ENCODE measurements at regions of chr7 and their contacts with region 1.

Region 1: GRCh38 chr7:55255496-55256435 is 109.4 kb upstream of the LANCL2 start:
- DNase-seq: peak; percentile 81
- H3K4me3 Mint-ChIP-seq: peak overlapping the region; percentile 78
- H3K27ac Mint-ChIP-seq: peak overlapping the region; percentile 72
- H3K4me1 Mint-ChIP-seq: no peaks in the 10 kb centered on the region
- H3K27me3 Mint-ChIP-seq: peaks cover 12% of the 10 kb centered on the region
- CTCF ChIP-seq: peak; percentile 68

Region 2: GRCh38 chr7:54781134-54781912 is 474.4 kb before region 1 on chr7:
- CTCF ChIA-PET with region 1: interaction called, 309 read pairs
- POLR2A ChIA-PET with region 1: interaction called, 3 read pairs
- intact Hi-C with region 1: no loop called
- DNase-seq: no peak
- H3K4me3 Mint-ChIP-seq: no peak overlapping the region
- H3K27ac Mint-ChIP-seq: no peak overlapping the region
- H3K4me1 Mint-ChIP-seq: no peaks in the 10 kb centered on the region
- H3K27me3 Mint-ChIP-seq: no peaks in the 10 kb centered on the region
- CTCF ChIP-seq: no peak

Region 3: DNA sequence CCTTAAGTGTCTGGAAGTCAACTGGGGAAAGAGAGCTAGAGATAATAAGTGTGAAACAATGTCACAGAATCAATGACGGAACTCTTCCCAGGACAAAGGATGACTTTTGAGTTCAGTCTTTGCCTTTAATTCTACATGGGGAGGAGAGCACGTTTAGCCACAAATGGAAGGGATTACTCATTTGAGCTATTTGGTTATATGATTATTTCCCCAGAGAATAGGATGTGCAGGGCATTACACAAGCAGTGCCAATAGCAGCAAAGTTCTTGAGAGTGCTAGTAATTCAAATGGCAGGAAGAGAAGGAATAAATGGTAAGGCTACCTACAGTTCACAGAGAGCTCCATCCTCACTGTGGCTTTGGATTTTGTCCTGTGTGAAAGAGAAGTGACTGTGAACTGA is 231.0 kb before region 1 on chr7:
- CTCF ChIA-PET with region 1: interaction called, 11 read pairs
- POLR2A ChIA-PET with region 1: interaction called, 6 read pairs
- intact Hi-C with region 1: loop called (anchors 1 kb)
- DNase-seq: peak; percentile 30
- H3K4me3 Mint-ChIP-seq: no peak overlapping the region
- H3K27ac Mint-ChIP-seq: peak overlapping the region; percentile 7
- H3K4me1 Mint-ChIP-seq: peaks cover 37% of the 10 kb centered on the region
- H3K27me3 Mint-ChIP-seq: no peaks in the 10 kb centered on the region
- CTCF ChIP-seq: no peak

Region 4: GRCh38 chr7:55212838-55213539 is 42.8 kb before region 1 on chr7:
- CTCF ChIA-PET with region 1: interaction called, 22 read pairs
- POLR2A ChIA-PET with region 1: interaction called, 7 read pairs
- intact Hi-C with region 1: no loop called
- DNase-seq: no peak
- H3K4me3 Mint-ChIP-seq: no peak overlapping the region
- H3K27ac Mint-ChIP-seq: no peak overlapping the region
- H3K4me1 Mint-ChIP-seq: no peaks in the 10 kb centered on the region
- H3K27me3 Mint-ChIP-seq: no peaks in the 10 kb centered on the region
- CTCF ChIP-seq: no peak

Region 5: GRCh38 chr7:55265836-55266642 is 10.3 kb after region 1 on chr7:
- CTCF ChIA-PET with region 1: interaction called, 31 read pairs
- POLR2A ChIA-PET with region 1: interaction called, 3 read pairs
- intact Hi-C with region 1: no loop called
- DNase-seq: no peak
- H3K4me3 Mint-ChIP-seq: no peak overlapping the region
- H3K27ac Mint-ChIP-seq: no peak overlapping the region
- H3K4me1 Mint-ChIP-seq: no peaks in the 10 kb centered on the region
- H3K27me3 Mint-ChIP-seq: peaks cover 43% of the 10 kb centered on the region
- CTCF ChIP-seq: no peak

Region 6: GRCh38 chr7:55396225-55396785 is 140.5 kb after region 1 on chr7:
- CTCF ChIA-PET with region 1: no interaction called
- POLR2A ChIA-PET with region 1: no interaction called
- intact Hi-C with region 1: no loop called
- DNase-seq: no peak
- H3K4me3 Mint-ChIP-seq: no peak overlapping the region
- H3K27ac Mint-ChIP-seq: no peak overlapping the region
- H3K4me1 Mint-ChIP-seq: no peaks in the 10 kb centered on the region
- H3K27me3 Mint-ChIP-seq: no peaks in the 10 kb centered on the region
- CTCF ChIP-seq: no peak